Activated CD4-positive, alpha-beta memory T cell treated with anti-CD3 and anti-CD28 coated beads for 36 hours (primary cell): ENCODE measurements at regions of chr9 and their contacts with region 1.

Region 1: DNA sequence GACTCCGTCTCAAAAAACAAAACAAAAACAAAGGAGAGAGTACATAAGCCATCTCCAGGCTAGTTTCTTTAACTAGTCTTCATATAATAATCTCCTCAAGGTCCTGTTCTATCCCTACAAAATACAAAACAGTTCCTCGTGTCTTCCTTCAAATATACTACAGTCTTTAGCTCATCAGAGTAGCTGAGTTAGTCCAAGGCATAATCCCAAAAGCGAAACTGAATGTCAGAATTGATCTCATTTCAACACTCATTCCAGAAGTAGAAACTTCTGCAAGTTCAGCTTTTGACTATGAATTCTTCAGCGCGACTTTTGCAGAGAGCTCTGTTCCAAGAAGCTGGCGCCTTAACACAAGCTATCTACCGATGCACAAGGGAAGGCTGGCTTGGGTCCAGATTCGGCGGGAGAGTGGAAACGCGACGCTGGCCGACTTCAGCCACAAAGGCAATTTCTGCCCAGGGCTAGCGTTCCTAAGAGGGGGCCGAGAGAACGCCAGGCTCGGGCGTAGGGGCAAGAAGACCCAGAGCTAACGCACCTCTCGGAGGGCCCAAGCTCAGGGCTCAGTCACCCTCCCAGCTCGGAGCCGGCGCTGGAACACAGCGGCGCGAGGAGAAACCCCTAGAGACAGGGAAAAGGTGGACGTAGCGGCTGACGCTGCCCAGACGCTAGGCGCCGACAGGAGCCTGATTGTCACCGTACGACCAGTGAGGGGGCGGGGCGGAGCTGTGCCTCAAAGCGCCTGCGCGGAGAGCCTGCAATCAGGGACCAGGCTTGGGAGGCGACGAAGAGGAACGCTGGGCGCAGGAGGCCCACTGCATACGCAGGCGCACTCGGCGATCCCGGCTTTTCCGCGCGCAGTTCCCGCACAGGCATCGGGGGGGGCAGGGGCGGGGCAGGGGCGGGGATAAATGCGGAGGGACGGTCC is 469 bp upstream of the HSDL2 start:
- DNase-seq: peak; percentile 99
- H3K4me3 Mint-ChIP-seq: peak overlapping the region; percentile 97
- H3K27ac Mint-ChIP-seq: peak overlapping the region; percentile 98
- H3K4me1 Mint-ChIP-seq: peaks cover 40% of the 10 kb centered on the region
- H3K27me3 Mint-ChIP-seq: no peaks in the 10 kb centered on the region

Region 2: DNA sequence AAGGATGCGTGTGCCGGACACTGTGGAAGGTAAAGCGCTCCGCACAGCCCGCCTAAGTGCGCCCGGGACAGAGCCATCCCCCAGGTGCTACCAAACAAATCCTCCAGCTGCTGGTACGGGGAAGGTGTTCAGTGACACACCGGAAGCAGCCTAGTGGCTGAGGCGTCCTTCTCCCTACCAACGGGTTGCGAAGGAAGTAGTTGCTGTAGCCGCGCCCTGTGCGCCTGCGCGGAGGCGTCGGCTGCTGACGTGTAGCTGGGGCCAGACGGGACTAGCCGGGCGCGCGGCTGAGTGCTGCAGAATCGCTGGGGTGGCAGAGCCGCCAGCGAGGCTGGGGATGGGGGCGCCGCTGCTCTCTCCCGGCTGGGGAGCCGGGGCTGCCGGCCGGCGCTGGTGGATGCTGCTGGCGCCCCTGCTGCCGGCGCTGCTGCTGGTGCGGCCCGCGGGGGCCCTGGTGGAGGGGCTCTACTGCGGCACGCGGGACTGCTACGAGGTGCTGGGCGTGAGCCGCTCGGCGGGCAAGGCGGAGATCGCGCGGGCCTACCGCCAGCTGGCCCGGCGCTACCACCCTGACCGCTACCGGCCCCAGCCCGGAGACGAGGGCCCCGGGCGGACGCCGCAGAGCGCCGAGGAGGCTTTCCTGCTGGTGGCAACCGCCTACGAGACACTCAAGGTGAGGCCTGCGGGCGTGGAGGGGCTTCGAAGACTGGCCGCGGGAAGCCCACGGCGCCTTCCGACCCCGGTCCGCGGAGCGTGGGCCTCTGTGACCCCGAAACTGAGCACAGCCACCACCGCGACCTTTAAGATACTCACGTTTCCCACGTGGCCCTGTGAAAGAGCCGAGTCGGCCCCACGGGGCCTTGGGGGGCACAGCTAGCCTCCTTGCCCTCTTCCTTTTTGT is 748.1 kb before region 1 on chr9 and contains the start of gene DNAJC25:
- CTCF ChIA-PET with region 1: no interaction called
- POLR2A ChIA-PET with region 1: no interaction called
- intact Hi-C with region 1: loop called (anchors 1 kb)
- DNase-seq: peak; percentile 98
- H3K4me3 Mint-ChIP-seq: peak within 1 kb of the TSS; percentile 90
- H3K27ac Mint-ChIP-seq: peak within 1 kb of the TSS; percentile 74
- H3K4me1 Mint-ChIP-seq: peaks cover 43% of the 10 kb centered on the region
- H3K27me3 Mint-ChIP-seq: no peaks in the 10 kb centered on the region
- total RNA-seq, gene DNAJC25: 4.2 to 4.5 TPM

Region 3: GRCh38 chr9:112097712-112098688 is 281.4 kb before region 1 on chr9:
- CTCF ChIA-PET with region 1: interaction called, 13 read pairs
- POLR2A ChIA-PET with region 1: no interaction called
- intact Hi-C with region 1: loop called (anchors 5 kb)
- DNase-seq: peak; percentile 74
- H3K4me3 Mint-ChIP-seq: no peak overlapping the region
- H3K27ac Mint-ChIP-seq: no peak overlapping the region
- H3K4me1 Mint-ChIP-seq: peaks cover 22% of the 10 kb centered on the region
- H3K27me3 Mint-ChIP-seq: no peaks in the 10 kb centered on the region

Region 4: GRCh38 chr9:112361601-112362000 is 17.8 kb before region 1 on chr9:
- CTCF ChIA-PET with region 1: interaction called, 15 read pairs
- POLR2A ChIA-PET with region 1: interaction called, 3 read pairs
- intact Hi-C with region 1: no loop called
- DNase-seq: no peak
- H3K4me3 Mint-ChIP-seq: no peak overlapping the region
- H3K27ac Mint-ChIP-seq: no peak overlapping the region
- H3K4me1 Mint-ChIP-seq: peaks cover 10% of the 10 kb centered on the region
- H3K27me3 Mint-ChIP-seq: peaks cover 7% of the 10 kb centered on the region

Region 5: DNA sequence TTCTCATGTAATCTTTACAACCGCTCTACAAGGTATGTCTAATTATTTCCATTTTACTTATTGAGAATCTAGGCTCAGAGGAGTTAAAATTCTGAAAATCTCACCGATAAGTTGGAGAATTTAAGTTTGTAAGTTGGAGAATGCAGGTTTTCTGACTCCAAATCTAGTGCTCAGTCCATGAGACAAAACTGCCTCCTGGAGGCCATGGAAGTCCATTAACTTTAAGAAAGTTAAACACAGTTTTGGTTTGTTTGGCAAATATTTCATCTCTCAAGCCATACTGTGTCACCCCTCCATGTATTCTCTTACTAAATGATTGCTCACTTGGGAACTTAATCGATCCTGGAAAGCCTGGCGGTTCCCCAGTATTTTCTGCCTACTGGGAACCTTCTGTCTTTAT is 285.9 kb after region 1 on chr9:
- CTCF ChIA-PET with region 1: no interaction called
- POLR2A ChIA-PET with region 1: no interaction called
- intact Hi-C with region 1: no loop called
- DNase-seq: no peak
- H3K4me3 Mint-ChIP-seq: no peak overlapping the region
- H3K27ac Mint-ChIP-seq: no peak overlapping the region
- H3K4me1 Mint-ChIP-seq: no peaks in the 10 kb centered on the region
- H3K27me3 Mint-ChIP-seq: no peaks in the 10 kb centered on the region

Region 6: DNA sequence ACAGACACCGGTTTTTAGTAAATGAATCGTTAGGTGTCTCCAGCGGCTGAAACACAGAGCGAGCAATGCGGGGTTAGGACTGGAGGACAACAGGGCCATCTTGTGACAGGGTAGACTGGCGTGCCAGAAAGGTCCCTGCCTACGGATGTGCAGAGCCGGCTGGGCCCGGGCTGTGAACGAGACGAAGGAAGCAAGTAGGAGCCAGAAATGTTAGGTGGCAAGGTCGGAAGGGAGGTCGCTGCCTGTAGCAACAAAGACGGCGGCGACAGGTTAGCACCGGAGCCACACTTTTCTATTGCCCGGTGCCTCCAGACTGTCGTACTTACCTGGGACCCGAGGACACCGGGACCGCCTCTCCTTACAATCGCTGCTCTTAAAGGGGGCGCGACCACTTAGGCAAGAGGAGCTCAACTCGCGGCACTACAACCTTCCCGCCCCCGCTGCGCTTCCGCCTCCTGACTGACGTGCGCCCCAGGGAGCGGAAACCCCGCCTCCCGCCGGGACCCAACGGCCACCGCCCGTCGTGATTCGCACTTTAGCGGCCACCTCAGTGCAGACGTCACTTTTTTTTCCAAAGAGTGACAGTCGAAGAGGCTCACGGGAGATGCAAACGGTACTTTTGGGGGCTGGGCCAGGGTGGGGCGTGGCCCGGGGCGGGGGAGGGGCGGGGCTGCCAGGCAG is 338.4 kb after region 1 on chr9 and contains the start of gene INIP:
- CTCF ChIA-PET with region 1: interaction called, 9 read pairs
- POLR2A ChIA-PET with region 1: interaction called, 9 read pairs
- intact Hi-C with region 1: loop called (anchors 1 kb)
- DNase-seq: peak; percentile 99
- H3K4me3 Mint-ChIP-seq: peak within 1 kb of the TSS; percentile 90
- H3K27ac Mint-ChIP-seq: peak within 1 kb of the TSS; percentile 93
- H3K4me1 Mint-ChIP-seq: peaks cover 35% of the 10 kb centered on the region
- H3K27me3 Mint-ChIP-seq: no peaks in the 10 kb centered on the region
- total RNA-seq, gene INIP: 35.1 to 37.8 TPM

Region 7: GRCh38 chr9:113484258-113484730 is 1104.9 kb after region 1 on chr9:
- CTCF ChIA-PET with region 1: no interaction called
- POLR2A ChIA-PET with region 1: no interaction called
- intact Hi-C with region 1: no loop called
- DNase-seq: no peak
- H3K4me3 Mint-ChIP-seq: no peak overlapping the region
- H3K27ac Mint-ChIP-seq: no peak overlapping the region
- H3K4me1 Mint-ChIP-seq: peaks cover 6% of the 10 kb centered on the region
- H3K27me3 Mint-ChIP-seq: no peaks in the 10 kb centered on the region